ENCODE measurements at regions of chr17 and their contacts with region 1.

Region 1: GRCh38 chr17:61412143-61412859 is 12.7 kb downstream of the TBX2 start:
- DNase-seq: peak; percentile 63 to 89
- H3K4me3 ChIP-seq: peak overlapping the region; percentile 92
- H3K27ac ChIP-seq: peak overlapping the region; percentile 27
- H3K4me1 ChIP-seq: 0 out of 2 replicates have a peak, but pooled peaks cover 6% of the 10 kb centered on the region
- H3K27me3 ChIP-seq: no peaks in the 10 kb centered on the region
- CTCF ChIP-seq: peak; percentile 99

Region 2: GRCh38 chr17:60720763-60721531 is 691.4 kb before region 1 on chr17:
- CTCF ChIA-PET with region 1: interaction called, 3 read pairs
- POLR2A ChIA-PET with region 1: no interaction called
- intact Hi-C with region 1: loop called (anchors 1 kb)
- DNase-seq: peak; percentile 22 to 46
- H3K4me3 ChIP-seq: no peak overlapping the region
- H3K27ac ChIP-seq: no peak overlapping the region
- H3K4me1 ChIP-seq: no peaks in the 10 kb centered on the region
- H3K27me3 ChIP-seq: no peaks in the 10 kb centered on the region
- CTCF ChIP-seq: peak; percentile 96

Region 3: GRCh38 chr17:61002316-61002736 is 410.0 kb before region 1 on chr17:
- CTCF ChIA-PET with region 1: interaction called, 3 read pairs
- POLR2A ChIA-PET with region 1: no interaction called
- intact Hi-C with region 1: loop called (anchors 5 kb)
- DNase-seq: no peak
- H3K4me3 ChIP-seq: no peak overlapping the region
- H3K27ac ChIP-seq: no peak overlapping the region
- H3K4me1 ChIP-seq: no peaks in the 10 kb centered on the region
- H3K27me3 ChIP-seq: no peaks in the 10 kb centered on the region
- CTCF ChIP-seq: peak; percentile 75

Region 4: DNA sequence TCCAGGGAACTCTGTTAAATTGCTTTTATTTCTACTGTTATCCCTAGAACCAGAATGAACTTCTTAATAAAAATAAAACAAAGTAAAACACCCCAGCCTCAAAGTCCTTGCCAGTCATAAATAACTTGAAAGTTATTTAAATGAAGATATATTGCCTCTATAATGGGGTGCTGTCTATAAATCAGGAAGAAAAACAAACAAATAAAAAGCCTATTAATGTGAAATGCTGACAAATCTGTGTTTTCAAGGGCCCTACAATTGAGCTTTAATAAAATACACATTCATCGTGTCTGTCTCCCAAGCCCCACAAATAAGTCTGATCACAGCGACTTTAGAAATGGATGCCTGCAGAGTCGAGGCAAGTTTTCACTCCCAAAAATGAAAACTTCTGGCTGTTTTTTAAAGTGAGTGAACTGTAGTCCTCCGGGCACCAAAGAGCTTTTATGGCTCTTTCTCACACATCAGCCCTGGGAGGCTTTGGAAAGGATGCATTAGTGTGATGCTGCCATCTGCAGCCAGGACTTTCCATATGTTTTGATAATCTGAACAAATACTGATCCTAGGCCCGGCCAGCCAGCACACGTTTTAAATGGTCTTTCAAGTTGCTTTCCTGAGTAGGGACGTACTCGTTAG is 162.4 kb after region 1 on chr17:
- CTCF ChIA-PET with region 1: interaction called, 6 read pairs
- POLR2A ChIA-PET with region 1: interaction called, 3 read pairs
- intact Hi-C with region 1: loop called (anchors 1 kb)
- DNase-seq: peak; percentile 43 to 50
- H3K4me3 ChIP-seq: no peak overlapping the region
- H3K27ac ChIP-seq: no peak overlapping the region
- H3K4me1 ChIP-seq: peaks cover 16% of the 10 kb centered on the region
- H3K27me3 ChIP-seq: no peaks in the 10 kb centered on the region
- CTCF ChIP-seq: peak; percentile 65

Region 5: GRCh38 chr17:61837175-61838051 is 425.1 kb after region 1 on chr17:
- CTCF ChIA-PET with region 1: interaction called, 3 read pairs
- POLR2A ChIA-PET with region 1: no interaction called
- intact Hi-C with region 1: loop called (anchors 1 kb)
- DNase-seq: peak in 1 of 2 experiments; percentile 48
- H3K4me3 ChIP-seq: no peak overlapping the region
- H3K27ac ChIP-seq: no peak overlapping the region
- H3K4me1 ChIP-seq: peaks cover 25% of the 10 kb centered on the region
- H3K27me3 ChIP-seq: no peaks in the 10 kb centered on the region
- CTCF ChIP-seq: peak; percentile 87

Measured in PC-9 (cell line).